Posterior cingulate gyrus (tissue), 11 donors: ENCODE measurements at regions of chr3 and their contacts with region 1.

Region 1: DNA sequence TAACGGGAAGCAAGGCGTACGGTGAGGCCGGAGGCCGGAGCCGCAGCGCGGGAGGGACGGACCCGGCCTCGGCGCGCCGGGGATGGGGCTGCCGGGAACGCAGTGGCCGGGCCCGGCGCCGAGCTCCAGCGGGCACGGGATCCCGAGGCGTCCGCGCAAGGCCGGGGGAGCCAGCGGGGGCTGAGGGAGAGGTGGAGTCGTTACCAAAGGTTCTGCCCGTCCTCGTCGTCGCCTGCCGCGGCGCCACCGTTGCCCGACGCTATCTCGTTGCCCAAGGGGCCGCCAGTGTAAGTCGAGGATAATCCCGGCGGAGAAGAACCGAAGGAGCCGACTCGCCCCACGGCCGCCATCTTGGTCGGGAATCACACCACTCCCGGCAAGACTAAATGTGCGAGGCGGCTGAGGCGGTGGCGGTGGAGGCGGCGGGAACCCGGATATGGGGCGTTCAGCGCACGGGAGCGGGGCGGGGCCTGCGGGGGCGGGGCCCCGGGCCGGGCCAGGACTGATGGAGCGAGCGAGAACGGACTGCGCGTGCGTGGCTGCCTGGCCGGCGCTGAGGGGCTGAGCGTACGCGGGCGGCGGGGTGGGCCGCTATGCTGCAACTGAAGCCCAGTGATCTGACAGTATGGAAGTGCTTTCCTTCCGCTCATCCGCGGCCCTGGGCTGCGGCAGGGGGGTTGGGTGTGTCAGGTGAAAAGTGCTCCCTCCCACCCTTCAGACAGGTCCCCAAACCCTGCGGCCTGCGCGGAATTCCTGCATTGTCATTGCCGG is at the start of gene DYNC1LI1:
- DNase-seq: peak; percentile 89 to 99 (median 94)

Region 2: GRCh38 chr3:32374788-32375595 is 195.6 kb before region 1 on chr3:
- intact Hi-C with region 1: no loop called
- DNase-seq: peak in 3 of 10 donors; percentile 25 to 40 (median 34)

Region 3: GRCh38 chr3:32484436-32484835 is 86.2 kb before region 1 on chr3:
- intact Hi-C with region 1: no loop called
- DNase-seq: no peak

Region 4: DNA sequence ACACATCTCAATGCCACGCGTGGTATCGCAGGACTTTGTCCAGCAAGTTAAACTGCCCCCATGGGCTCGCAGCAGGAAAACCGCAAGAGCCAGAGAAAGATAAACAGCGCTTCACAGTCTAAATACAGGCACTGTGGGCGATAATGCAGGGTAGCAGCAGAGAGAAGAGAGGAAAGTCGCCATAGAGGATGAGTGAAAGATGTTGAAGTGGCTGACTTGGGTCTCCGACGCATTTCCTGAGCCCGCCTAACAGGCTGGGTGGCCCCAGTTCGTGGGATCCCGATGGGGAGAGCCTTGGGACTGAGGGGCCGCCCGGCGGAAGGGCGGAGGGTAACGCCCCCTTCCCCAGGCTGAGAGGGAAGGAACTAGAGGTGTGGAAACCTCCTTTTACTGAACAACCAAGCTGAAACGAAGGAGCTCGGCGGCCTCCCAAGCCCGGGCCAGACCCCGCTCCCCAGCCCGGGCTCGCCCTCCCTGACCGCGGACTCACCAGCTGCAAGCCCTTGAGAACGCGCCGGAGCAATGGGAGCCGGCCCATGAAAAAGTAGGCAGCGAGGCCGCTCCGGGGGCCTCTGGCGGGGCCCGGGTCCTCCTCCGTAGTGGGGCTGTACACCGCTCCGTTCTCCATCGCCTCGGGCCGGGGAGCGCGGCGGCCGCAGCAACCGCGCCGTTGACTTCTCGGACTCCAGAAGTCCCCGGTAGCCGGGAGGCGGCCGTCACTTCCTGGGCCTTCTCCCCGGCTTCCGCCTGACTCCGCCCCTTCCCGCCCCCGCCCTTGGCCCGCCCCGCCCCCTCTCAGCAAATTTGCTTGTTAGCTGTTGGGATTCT is 68.3 kb before region 1 on chr3 and contains the start of gene CMTM6:
- intact Hi-C with region 1: loop called (anchors 5 kb)
- DNase-seq: peak; percentile 65 to 97 (median 79)

Region 5: GRCh38 chr3:32641356-32641755 is 70.8 kb after region 1 on chr3:
- intact Hi-C with region 1: no loop called
- DNase-seq: peak in 1 of 10 donors; percentile 43

Region 6: GRCh38 chr3:32684800-32685542 is 114.4 kb after region 1 on chr3 and contains the start of gene CNOT10:
- intact Hi-C with region 1: loop called (anchors 1 kb)
- DNase-seq: peak; percentile 90 to 100 (median 96)

Region 7: GRCh38 chr3:32751377-32751776 is 180.8 kb after region 1 on chr3:
- intact Hi-C with region 1: no loop called
- DNase-seq: no peak